CD8-positive, alpha-beta memory T cell (primary cell): ENCODE measurements at regions of chr1 and their contacts with region 1.

Region 1: DNA sequence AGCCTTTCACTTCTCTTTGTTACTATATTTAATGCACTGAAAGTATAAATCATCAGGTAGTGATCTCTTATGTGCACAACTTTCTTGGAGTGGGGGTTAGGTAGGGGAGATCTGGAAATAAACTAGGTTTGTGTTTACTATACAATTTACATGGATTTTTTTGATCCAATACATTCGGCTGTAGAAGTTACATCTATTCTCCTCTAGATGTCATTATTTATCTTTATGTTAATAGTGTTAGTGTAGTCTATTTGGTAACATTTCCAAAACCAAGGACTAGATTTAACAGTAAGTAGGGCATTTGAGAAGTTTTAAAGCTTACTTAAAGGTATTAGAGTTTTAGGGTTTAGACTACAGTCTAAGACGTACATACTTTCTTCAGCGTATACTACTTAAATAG is 5.4 kb downstream of the VPS45 start:
- DNase-seq: peak in 2 of 5 donors; percentile 28 to 38
- H3K4me3 ChIP-seq: no peak overlapping the region
- H3K4me3 Mint-ChIP-seq: peak overlapping the region in 1 of 7 donors; percentile 42
- H3K27ac ChIP-seq: no peak overlapping the region
- H3K27ac Mint-ChIP-seq: peak overlapping the region in 3 of 8 donors; percentile 34 to 58 (median 56)
- H3K4me1 ChIP-seq: peaks cover 11% of the 10 kb centered on the region
- H3K4me1 Mint-ChIP-seq: peaks cover 28 to 53% (median 50%) of the 10 kb centered on the region in 3 donors
- H3K27me3 ChIP-seq: no peaks in the 10 kb centered on the region
- H3K27me3 Mint-ChIP-seq: no peaks in the 10 kb centered on the region

Region 2: DNA sequence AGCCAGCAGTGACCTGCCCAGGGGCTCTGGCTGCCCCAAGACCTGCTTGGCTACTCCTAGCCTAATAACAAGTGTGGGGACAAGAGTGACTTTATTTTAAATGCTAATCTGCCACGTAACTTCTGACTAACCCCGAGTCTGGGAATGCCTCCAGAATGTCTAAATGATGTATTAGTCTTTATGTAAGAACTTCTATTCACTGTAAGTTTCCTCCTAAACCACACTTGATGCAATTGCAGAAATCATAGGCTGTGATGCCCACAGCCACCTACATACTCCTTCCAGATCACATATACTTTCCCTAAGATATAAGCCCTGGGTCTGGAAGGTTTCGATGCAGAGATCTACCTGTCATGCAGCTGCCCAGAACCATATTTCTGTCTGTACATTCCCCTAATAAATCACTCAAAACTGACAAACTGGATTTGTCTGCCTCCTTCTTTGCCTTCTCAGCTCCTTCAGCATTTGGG is 11.3 kb before region 1 on chr1:
- CTCF ChIA-PET with region 1: no interaction called
- POLR2A ChIA-PET with region 1: no interaction called
- DNase-seq: no peak
- H3K4me3 ChIP-seq: no peak overlapping the region
- H3K4me3 Mint-ChIP-seq: no peak overlapping the region
- H3K27ac ChIP-seq: no peak overlapping the region
- H3K27ac Mint-ChIP-seq: no peak overlapping the region
- H3K4me1 ChIP-seq: peaks cover 8% of the 10 kb centered on the region
- H3K4me1 Mint-ChIP-seq: peaks cover 5 to 10% (median 8%) of the 10 kb centered on the region in 3 donors
- H3K27me3 ChIP-seq: no peaks in the 10 kb centered on the region
- H3K27me3 Mint-ChIP-seq: no peaks in the 10 kb centered on the region

Region 3: DNA sequence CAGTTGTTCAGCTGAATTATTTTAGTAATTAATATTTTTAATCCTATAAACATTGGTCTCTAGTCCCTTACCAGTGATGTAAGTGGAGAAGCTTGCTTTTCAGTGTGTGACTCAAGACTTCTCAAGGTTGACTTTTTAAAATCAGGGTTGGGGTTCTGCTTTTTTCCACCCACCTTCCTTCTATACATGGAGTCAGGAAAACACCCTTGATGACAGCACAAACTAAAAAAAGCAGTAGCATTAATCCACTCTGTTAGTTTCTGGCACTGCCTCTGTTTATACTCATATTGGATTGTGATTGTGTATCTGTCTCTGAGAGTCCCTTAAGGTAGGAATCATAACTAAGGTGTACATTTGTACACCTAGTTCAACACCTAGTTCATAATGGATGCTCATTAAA is 68.5 kb after region 1 on chr1:
- CTCF ChIA-PET with region 1: interaction called, 10 read pairs
- POLR2A ChIA-PET with region 1: interaction called, 3 read pairs
- DNase-seq: no peak
- H3K4me3 ChIP-seq: no peak overlapping the region
- H3K4me3 Mint-ChIP-seq: no peak overlapping the region
- H3K27ac ChIP-seq: no peak overlapping the region
- H3K27ac Mint-ChIP-seq: peak overlapping the region in 1 of 8 donors; percentile 46
- H3K4me1 ChIP-seq: peaks cover 11% of the 10 kb centered on the region
- H3K4me1 Mint-ChIP-seq: peaks cover 4 to 20% (median 13%) of the 10 kb centered on the region in 3 donors
- H3K27me3 ChIP-seq: no peaks in the 10 kb centered on the region
- H3K27me3 Mint-ChIP-seq: no peaks in the 10 kb centered on the region

Region 4: DNA sequence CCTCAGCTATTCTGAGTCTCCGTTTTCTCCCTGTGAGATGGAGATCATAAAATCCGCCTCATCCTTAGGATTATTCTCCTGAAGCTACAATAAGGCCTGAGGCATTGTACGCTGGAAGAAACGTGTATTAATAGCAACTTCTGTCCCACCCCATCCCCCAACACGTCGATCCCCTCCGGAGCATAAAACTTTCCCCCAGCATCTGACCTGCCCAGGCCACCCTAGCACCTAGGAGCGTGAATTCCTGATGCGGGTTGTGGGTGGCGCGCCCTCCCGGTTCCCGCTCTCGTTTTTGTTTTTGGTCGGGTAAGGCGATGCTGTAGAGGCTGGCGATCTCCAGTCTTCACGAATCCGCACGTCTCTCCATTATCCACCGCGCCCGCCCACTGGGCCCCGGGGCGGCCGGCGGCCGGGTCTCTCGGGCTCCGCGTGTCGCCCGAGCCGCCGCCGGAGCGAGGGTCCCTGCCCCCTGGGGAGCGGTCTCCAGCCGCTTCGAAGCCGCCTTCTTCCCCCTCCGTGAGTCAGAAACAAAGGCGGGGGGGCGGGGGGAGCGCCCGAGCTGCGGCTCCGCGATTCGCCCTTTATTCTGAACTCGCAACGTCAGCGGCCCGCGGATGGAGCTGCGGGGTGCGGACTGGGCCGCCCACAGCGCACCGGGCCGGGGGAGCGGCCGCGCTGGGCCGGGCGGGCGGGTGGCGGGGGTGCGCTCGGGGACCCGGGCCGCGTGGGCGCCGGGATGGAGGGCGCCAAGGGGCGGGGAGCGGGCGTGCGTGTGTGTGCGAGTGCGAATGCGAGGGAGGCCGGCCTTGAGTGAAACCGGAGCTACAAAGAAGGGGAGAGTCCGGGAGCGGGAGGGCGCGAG is 76.5 kb after region 1 on chr1 and contains the start of gene PLEKHO1:
- CTCF ChIA-PET with region 1: interaction called, 29 read pairs
- POLR2A ChIA-PET with region 1: interaction called, 5 read pairs
- DNase-seq: peak; percentile 68 to 91 (median 78)
- H3K4me3 ChIP-seq: peak within 1 kb of the TSS; percentile 80
- H3K4me3 Mint-ChIP-seq: peak within 1 kb of the TSS; percentile 90 to 99 (median 97)
- H3K27ac ChIP-seq: peak within 1 kb of the TSS; percentile 79
- H3K27ac Mint-ChIP-seq: peak within 1 kb of the TSS; percentile 89 to 99 (median 98)
- H3K4me1 ChIP-seq: peaks cover 34% of the 10 kb centered on the region
- H3K4me1 Mint-ChIP-seq: peaks cover 48 to 71% (median 71%) of the 10 kb centered on the region in 3 donors
- H3K27me3 ChIP-seq: no peaks in the 10 kb centered on the region
- H3K27me3 Mint-ChIP-seq: peaks cover 0 to 4% of the 10 kb centered on the region in 2 donors
- total RNA-seq, gene PLEKHO1: 44.9 to 47.2 TPM

Region 5: GRCh38 chr1:150162862-150163706 is 90.1 kb after region 1 on chr1:
- CTCF ChIA-PET with region 1: interaction called, 150 read pairs
- POLR2A ChIA-PET with region 1: interaction called, 4 read pairs
- DNase-seq: no peak
- H3K4me3 ChIP-seq: no peak overlapping the region
- H3K4me3 Mint-ChIP-seq: peak overlapping the region in 1 of 7 donors; percentile 58
- H3K27ac ChIP-seq: peak overlapping the region; percentile 85
- H3K27ac Mint-ChIP-seq: peak overlapping the region in 4 of 8 donors; percentile 4 to 78 (median 56)
- H3K4me1 ChIP-seq: peaks cover 42% of the 10 kb centered on the region
- H3K4me1 Mint-ChIP-seq: peaks cover 24 to 55% (median 38%) of the 10 kb centered on the region in 3 donors
- H3K27me3 ChIP-seq: no peaks in the 10 kb centered on the region
- H3K27me3 Mint-ChIP-seq: peaks cover 0 to 1% of the 10 kb centered on the region in 2 donors